ENCODE measurements at regions of chr18 and their contacts with region 1.

Region 1: GRCh38 chr18:6661692-6662415 is 67.7 kb upstream of the ARHGAP28 start:
- DNase-seq: no peak
- H3K4me3 ChIP-seq: no peak overlapping the region
- H3K27ac ChIP-seq: no peak overlapping the region
- H3K4me1 ChIP-seq: no peaks in the 10 kb centered on the region
- H3K27me3 ChIP-seq: no peaks in the 10 kb centered on the region
- CTCF ChIP-seq: no peak
- POLR2A ChIP-seq: no peak

Region 2: GRCh38 chr18:6708890-6709289 is 47.0 kb after region 1 on chr18:
- intact Hi-C with region 1: loop called (anchors 2 kb)
- DNase-seq: no peak
- H3K4me3 ChIP-seq: no peak overlapping the region
- H3K27ac ChIP-seq: no peak overlapping the region
- H3K4me1 ChIP-seq: no peaks in the 10 kb centered on the region
- H3K27me3 ChIP-seq: no peaks in the 10 kb centered on the region
- CTCF ChIP-seq: no peak
- POLR2A ChIP-seq: no peak

Region 3: GRCh38 chr18:6729247-6730091 is 67.6 kb after region 1 on chr18 and contains the start of gene ARHGAP28:
- intact Hi-C with region 1: no loop called
- DNase-seq: no peak
- H3K4me3 ChIP-seq: peak within 1 kb of the TSS; percentile 69 to 72
- H3K27ac ChIP-seq: peak within 1 kb of the TSS; percentile 91
- H3K4me1 ChIP-seq: peaks cover 27% of the 10 kb centered on the region
- H3K27me3 ChIP-seq: no peaks in the 10 kb centered on the region
- CTCF ChIP-seq: peak in 1 of 3 experiments; percentile 23
- POLR2A ChIP-seq: no peak
- total RNA-seq, gene ARHGAP28: 7.6 TPM

Region 4: GRCh38 chr18:6764382-6764781 is 102.5 kb after region 1 on chr18:
- intact Hi-C with region 1: no loop called
- DNase-seq: no peak
- H3K4me3 ChIP-seq: no peak overlapping the region
- H3K27ac ChIP-seq: peak overlapping the region; percentile 2
- H3K4me1 ChIP-seq: no peaks in the 10 kb centered on the region
- H3K27me3 ChIP-seq: no peaks in the 10 kb centered on the region
- CTCF ChIP-seq: no peak
- POLR2A ChIP-seq: no peak

Measured in vagina (tissue), 2 donors.